Adrenal gland (tissue), 19 donors: ENCODE measurements at regions of chr5 and their contacts with region 1.

Region 1: GRCh38 chr5:1140171-1140817 is 28.4 kb upstream of the SLC12A7 start:
- DNase-seq: peak; percentile 70 to 84 (median 77)
- H3K4me3 ChIP-seq: no peak overlapping the region
- H3K27ac ChIP-seq: no peak overlapping the region
- H3K4me1 ChIP-seq: no peaks in the 10 kb centered on the region
- H3K27me3 ChIP-seq: peaks cover 6% of the 10 kb centered on the region
- CTCF ChIP-seq: peak; percentile 76 to 85 (median 80)
- POLR2A ChIP-seq: no peak

Region 2: DNA sequence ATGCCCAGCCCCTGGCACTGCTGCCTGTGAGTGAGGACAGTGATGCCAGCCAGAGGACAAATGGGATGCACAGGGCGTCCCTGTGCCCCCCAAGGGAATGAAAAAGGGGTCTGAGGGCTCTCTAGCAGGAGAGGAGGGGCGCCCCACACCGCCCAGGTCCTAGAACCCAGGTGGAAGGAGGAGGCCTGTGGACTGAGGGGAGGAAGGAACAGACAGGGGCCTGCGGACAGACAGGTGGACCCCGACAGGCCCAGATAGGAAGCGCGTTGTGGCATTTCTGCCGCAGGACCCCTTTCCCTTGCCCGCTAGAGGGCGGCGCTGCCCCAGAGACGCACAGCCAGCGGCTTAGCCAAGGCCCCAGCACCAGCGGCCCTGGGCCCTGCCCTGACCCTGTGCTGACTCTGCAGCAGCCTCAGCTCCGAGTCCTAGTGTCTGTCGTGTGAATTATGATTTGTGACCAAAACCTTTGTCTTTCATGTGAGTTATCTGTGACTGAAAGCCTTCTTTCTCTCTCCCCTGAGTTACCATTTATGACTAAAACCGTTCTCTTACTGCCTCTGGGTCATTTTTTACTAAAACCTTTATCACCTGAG is 216.9 kb before region 1 on chr5:
- intact Hi-C with region 1: loop called (anchors 2 kb)
- DNase-seq: peak; percentile 83 to 90 (median 88)
- H3K4me3 ChIP-seq: no peak overlapping the region
- H3K27ac ChIP-seq: no peak overlapping the region
- H3K4me1 ChIP-seq: peaks cover 6 to 8% of the 10 kb centered on the region in 2 donors
- H3K27me3 ChIP-seq: peaks cover 7% of the 10 kb centered on the region
- CTCF ChIP-seq: peak; percentile 78 to 94 (median 88)
- POLR2A ChIP-seq: no peak

Region 3: GRCh38 chr5:1004461-1005248 is 135.6 kb before region 1 on chr5:
- intact Hi-C with region 1: loop called (anchors 10 kb)
- DNase-seq: peak; percentile 62 to 76 (median 72)
- H3K4me3 ChIP-seq: peak overlapping the region in 3 of 4 donors; percentile 3 to 60 (median 28)
- H3K27ac ChIP-seq: peak overlapping the region in 3 of 5 donors; percentile 32 to 71 (median 62)
- H3K4me1 ChIP-seq: peaks cover 4 to 19% of the 10 kb centered on the region in 2 donors
- H3K27me3 ChIP-seq: peaks cover 20% of the 10 kb centered on the region
- CTCF ChIP-seq: peak in 3 of 6 experiments; percentile 16 to 22 (median 20)
- POLR2A ChIP-seq: no peak